ENCODE measurements at regions of chr1 and their contacts with region 1.

Region 1: GRCh38 chr1:40553017-40553416 is 21.6 kb downstream of the ZNF684 start:
- DNase-seq: no peak
- ATAC-seq: no peak
- H3K4me3 Mint-ChIP-seq: no peak overlapping the region
- H3K27ac Mint-ChIP-seq: no peak overlapping the region
- H3K4me1 Mint-ChIP-seq: no peaks in the 10 kb centered on the region
- H3K27me3 Mint-ChIP-seq: no peaks in the 10 kb centered on the region

Region 2: GRCh38 chr1:40531381-40532061 is 21.5 kb before region 1 on chr1 and contains the start of gene ZNF684:
- CTCF ChIA-PET with region 1: interaction called, 12 read pairs
- POLR2A ChIA-PET with region 1: no interaction called
- intact Hi-C with region 1: no loop called
- DNase-seq: peak; percentile 91
- ATAC-seq: peak; percentile 98
- H3K4me3 Mint-ChIP-seq: peak within 1 kb of the TSS; percentile 88
- H3K27ac Mint-ChIP-seq: peak within 1 kb of the TSS; percentile 83
- H3K4me1 Mint-ChIP-seq: peaks cover 17% of the 10 kb centered on the region
- H3K27me3 Mint-ChIP-seq: peaks cover 6% of the 10 kb centered on the region
- total RNA-seq, gene ZNF684: 4.5 to 6.6 TPM

Region 3: GRCh38 chr1:40564506-40564905 is 11.5 kb after region 1 on chr1:
- CTCF ChIA-PET with region 1: no interaction called
- POLR2A ChIA-PET with region 1: no interaction called
- intact Hi-C with region 1: no loop called
- DNase-seq: no peak
- ATAC-seq: no peak
- H3K4me3 Mint-ChIP-seq: no peak overlapping the region
- H3K27ac Mint-ChIP-seq: no peak overlapping the region
- H3K4me1 Mint-ChIP-seq: peaks cover 12% of the 10 kb centered on the region
- H3K27me3 Mint-ChIP-seq: peaks cover 8% of the 10 kb centered on the region

Region 4: DNA sequence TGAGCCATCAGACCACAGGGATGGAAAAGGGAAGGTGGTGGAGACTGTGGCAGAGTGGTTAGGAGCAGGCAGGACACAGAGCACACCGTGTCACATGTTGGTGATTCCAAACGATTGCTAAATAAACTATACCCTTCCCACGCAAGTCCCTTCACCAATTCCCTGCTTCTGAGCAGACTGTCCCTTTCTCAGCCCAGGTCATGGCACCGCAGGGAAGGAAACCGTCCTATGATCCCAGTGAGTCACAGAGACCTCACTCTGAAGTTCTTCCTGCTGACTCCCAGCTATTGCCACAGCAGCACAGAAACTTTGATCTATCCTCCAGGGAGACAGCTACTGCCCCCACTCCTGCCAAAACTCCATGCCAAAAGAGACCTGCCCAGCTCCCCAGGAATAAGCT is 93.3 kb after region 1 on chr1:
- CTCF ChIA-PET with region 1: no interaction called
- POLR2A ChIA-PET with region 1: no interaction called
- intact Hi-C with region 1: no loop called
- DNase-seq: no peak
- ATAC-seq: no peak
- H3K4me3 Mint-ChIP-seq: no peak overlapping the region
- H3K27ac Mint-ChIP-seq: no peak overlapping the region
- H3K4me1 Mint-ChIP-seq: peaks cover 4% of the 10 kb centered on the region
- H3K27me3 Mint-ChIP-seq: peaks cover 3% of the 10 kb centered on the region